Activated CD8-positive, alpha-beta T cell treated with anti-CD3 and anti-CD28 coated beads for 36 hours (primary cell): ENCODE measurements at regions of chr13 and their contacts with region 1.

Region 1: DNA sequence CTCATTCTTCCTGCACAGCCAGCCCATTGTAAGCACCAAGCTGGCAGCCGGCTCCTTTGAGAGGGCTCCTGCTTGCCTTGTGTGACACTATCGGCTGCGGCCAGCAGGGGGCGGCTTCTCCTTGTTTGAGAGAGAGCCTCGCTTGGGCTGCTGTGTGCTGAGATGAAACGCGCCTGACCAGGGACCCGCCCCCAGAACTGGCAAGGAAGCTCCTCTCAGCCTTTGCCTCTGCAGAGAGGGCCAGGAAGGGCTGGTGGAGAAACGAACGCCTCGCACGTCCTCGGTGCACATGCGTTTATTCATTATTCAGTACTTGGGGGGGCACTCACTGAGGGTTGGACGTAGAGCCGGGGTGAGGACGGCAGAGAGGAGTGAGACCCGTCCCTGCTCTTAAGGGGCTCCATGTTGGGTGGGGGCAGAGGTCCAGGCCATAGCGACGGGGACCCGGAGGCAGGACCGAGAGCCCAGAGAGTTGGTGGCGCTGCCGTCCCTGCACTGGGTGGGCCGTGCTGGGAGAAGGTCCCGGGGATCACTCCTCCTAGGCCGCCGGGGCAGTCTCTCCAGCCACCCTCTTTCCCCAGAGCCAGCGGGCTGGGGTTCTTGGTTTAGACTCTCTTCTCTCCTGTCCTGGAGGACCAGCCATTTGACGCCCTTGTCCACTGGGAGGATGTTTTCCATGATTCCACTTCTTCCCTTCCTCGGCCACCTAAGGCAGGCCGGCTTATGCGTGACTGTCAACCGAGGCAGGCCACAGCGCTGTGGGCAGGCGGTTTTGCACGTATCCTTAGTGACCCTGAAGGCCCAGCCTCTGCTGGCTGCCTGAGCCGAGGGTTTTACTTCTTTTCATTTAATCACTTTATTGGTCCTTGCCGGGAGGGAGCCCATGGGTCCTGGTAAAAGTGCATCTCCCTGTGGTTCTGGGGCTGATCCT is 174.5 kb downstream of the KATNAL1 start:
- DNase-seq: peak; percentile 99
- ATAC-seq: peak; percentile 100
- H3K4me3 Mint-ChIP-seq: no peak overlapping the region
- H3K27ac Mint-ChIP-seq: peak overlapping the region; percentile 16
- H3K4me1 Mint-ChIP-seq: peaks cover 12% of the 10 kb centered on the region
- H3K27me3 Mint-ChIP-seq: no peaks in the 10 kb centered on the region
- CTCF ChIP-seq: peak; percentile 80

Region 2: DNA sequence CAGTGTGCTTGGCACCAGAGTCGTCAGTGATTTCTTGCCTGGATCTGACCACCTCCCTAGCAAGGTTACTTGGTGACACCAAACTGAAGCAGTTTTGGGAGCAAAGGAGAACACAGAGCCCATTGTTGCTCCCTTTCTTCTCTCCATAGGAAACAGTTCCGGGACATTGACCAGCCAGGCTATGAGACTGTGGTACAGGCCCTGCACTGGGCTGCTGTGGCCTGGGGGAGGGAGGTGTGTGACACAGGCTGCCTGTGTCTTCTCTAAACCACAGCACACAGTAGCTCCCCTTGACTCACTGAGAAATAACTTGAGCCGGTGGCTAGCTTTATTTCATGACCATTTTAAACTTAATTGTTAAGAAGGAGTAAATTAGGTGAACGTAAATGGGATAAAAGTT is 67.7 kb before region 1 on chr13:
- CTCF ChIA-PET with region 1: no interaction called
- POLR2A ChIA-PET with region 1: no interaction called
- intact Hi-C with region 1: no loop called
- DNase-seq: no peak
- ATAC-seq: no peak
- H3K4me3 Mint-ChIP-seq: no peak overlapping the region
- H3K27ac Mint-ChIP-seq: no peak overlapping the region
- H3K4me1 Mint-ChIP-seq: no peaks in the 10 kb centered on the region
- H3K27me3 Mint-ChIP-seq: no peaks in the 10 kb centered on the region
- CTCF ChIP-seq: no peak

Region 3: GRCh38 chr13:30088312-30088855 is 44.5 kb before region 1 on chr13:
- CTCF ChIA-PET with region 1: no interaction called
- POLR2A ChIA-PET with region 1: no interaction called
- intact Hi-C with region 1: no loop called
- DNase-seq: no peak
- ATAC-seq: no peak
- H3K4me3 Mint-ChIP-seq: no peak overlapping the region
- H3K27ac Mint-ChIP-seq: no peak overlapping the region
- H3K4me1 Mint-ChIP-seq: peaks cover 2% of the 10 kb centered on the region
- H3K27me3 Mint-ChIP-seq: no peaks in the 10 kb centered on the region
- CTCF ChIP-seq: no peak

Region 4: DNA sequence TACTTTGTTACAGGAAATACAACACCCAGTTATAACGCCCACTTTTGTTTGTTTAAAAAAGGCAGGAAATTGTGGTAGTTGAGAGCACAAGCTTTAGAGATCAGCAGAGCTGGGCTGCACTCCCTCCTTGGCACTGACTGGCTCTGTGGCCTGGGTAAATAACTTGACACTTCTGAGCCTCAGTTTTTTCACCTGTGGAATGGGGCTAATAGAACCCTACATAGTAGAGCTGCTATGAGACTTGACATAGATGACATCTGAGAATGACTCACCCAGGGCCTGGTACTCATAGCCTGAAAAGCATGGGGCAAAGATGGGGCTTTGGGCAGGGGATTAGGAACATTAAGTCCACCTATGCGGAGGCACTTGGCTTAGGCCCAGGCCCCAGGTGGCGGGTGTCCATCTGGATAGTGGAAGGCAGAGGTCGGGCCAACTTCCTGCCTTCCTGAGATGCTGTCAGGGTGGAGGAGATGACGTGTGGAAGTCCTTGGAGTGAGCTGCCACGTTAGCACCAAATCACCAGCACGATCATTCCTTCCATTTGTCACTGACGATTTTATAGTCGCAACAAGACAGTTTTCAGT is 15.4 kb after region 1 on chr13:
- CTCF ChIA-PET with region 1: interaction called, 102 read pairs
- POLR2A ChIA-PET with region 1: interaction called, 6 read pairs
- intact Hi-C with region 1: no loop called
- DNase-seq: peak; percentile 45
- ATAC-seq: peak; percentile 45
- H3K4me3 Mint-ChIP-seq: no peak overlapping the region
- H3K27ac Mint-ChIP-seq: peak overlapping the region; percentile 90
- H3K4me1 Mint-ChIP-seq: peaks cover 77% of the 10 kb centered on the region
- H3K27me3 Mint-ChIP-seq: no peaks in the 10 kb centered on the region
- CTCF ChIP-seq: no peak

Region 5: DNA sequence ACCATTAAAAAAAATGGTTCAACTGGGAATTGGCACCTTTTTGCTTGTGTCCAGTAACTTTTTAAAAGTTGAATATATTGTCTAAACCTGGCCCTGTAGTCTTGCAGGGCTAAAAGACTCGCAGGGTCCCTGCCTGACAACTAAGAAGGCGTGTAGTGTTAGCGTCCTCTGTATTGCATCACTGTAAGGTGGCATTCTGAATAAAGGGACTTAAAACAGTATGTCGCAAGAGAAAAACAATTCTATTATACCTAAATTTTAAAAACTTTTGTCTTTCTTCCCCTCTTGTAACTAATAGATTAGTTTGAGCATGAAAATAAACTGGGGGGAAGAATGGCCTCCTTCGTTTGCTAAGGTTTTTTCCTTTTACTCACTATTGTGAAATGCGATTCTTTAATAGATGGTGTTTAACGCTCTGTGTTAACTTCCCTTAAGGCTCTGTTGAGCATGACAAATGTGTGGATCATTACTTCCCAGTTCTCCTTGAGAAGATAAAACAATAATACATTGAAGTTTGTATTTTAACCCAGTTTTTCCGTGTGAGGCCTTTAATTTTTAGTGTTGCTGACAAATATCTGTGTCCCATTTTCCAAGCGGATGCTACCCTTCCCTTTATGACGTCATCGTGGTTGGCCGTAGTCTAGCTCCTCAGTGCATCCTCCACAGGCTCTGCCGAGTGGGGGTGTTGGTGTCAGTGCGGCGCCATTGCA is 39.9 kb after region 1 on chr13:
- CTCF ChIA-PET with region 1: interaction called, 27 read pairs
- POLR2A ChIA-PET with region 1: interaction called, 4 read pairs
- intact Hi-C with region 1: no loop called
- DNase-seq: no peak
- ATAC-seq: no peak
- H3K4me3 Mint-ChIP-seq: no peak overlapping the region
- H3K27ac Mint-ChIP-seq: no peak overlapping the region
- H3K4me1 Mint-ChIP-seq: peaks cover 20% of the 10 kb centered on the region
- H3K27me3 Mint-ChIP-seq: no peaks in the 10 kb centered on the region
- CTCF ChIP-seq: no peak

Region 6: GRCh38 chr13:30235216-30235615 is 102.3 kb after region 1 on chr13:
- CTCF ChIA-PET with region 1: interaction called, 10 read pairs
- POLR2A ChIA-PET with region 1: no interaction called
- intact Hi-C with region 1: no loop called
- DNase-seq: no peak
- ATAC-seq: no peak
- H3K4me3 Mint-ChIP-seq: no peak overlapping the region
- H3K27ac Mint-ChIP-seq: no peak overlapping the region
- H3K4me1 Mint-ChIP-seq: no peaks in the 10 kb centered on the region
- H3K27me3 Mint-ChIP-seq: no peaks in the 10 kb centered on the region
- CTCF ChIP-seq: no peak

Region 7: GRCh38 chr13:30334663-30335386 is 201.9 kb after region 1 on chr13:
- CTCF ChIA-PET with region 1: interaction called, 19 read pairs
- POLR2A ChIA-PET with region 1: no interaction called
- intact Hi-C with region 1: no loop called
- DNase-seq: peak; percentile 24
- ATAC-seq: peak; percentile 56
- H3K4me3 Mint-ChIP-seq: no peak overlapping the region
- H3K27ac Mint-ChIP-seq: no peak overlapping the region
- H3K4me1 Mint-ChIP-seq: peaks cover 9% of the 10 kb centered on the region
- H3K27me3 Mint-ChIP-seq: no peaks in the 10 kb centered on the region
- CTCF ChIP-seq: peak; percentile 78

Region 8: DNA sequence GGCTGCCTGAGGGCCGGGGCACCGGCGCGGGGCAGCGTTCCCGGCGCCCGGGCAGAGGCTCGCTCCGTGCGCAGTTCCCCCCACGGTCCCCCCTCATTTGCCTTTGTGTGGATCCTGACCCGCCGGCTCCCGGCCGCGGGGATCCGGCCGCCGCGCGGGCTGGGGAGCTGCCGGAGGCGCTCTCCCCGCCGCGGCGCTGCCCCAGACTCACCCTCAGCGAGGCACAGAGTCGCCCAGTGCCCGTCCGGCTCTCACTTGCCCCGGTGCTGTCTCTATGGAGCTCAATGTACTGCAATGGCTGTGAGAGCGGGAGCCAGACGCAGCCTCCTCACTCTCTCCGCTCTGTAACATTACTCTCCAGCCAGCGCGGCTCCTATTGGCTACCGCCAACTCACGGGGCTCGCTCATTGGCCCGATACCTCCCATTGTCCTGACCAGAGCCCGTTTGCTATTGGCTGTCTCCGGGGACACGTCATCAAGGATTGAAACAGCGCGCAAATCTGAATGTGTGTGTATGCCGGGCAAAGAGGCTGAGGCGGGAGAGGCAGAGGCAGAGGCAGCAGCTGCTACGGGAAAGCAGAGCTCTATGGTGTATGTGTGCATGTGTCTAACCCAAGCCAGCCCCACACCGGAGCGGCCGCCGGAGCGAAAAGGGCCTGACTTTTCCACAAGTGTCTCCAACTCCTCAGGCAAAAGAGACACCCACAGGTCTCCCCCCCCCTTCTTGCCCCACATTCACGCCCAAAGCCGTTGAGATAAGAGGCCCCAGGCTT is 332.9 kb after region 1 on chr13 and contains the start of gene HMGB1:
- CTCF ChIA-PET with region 1: interaction called, 8 read pairs
- POLR2A ChIA-PET with region 1: interaction called, 4 read pairs
- intact Hi-C with region 1: loop called (anchors 10 kb)
- DNase-seq: peak; percentile 99
- ATAC-seq: peak; percentile 90
- H3K4me3 Mint-ChIP-seq: peak within 1 kb of the TSS; percentile 97
- H3K27ac Mint-ChIP-seq: peak within 1 kb of the TSS; percentile 97
- H3K4me1 Mint-ChIP-seq: peaks cover 25% of the 10 kb centered on the region
- H3K27me3 Mint-ChIP-seq: peaks cover 1% of the 10 kb centered on the region
- CTCF ChIP-seq: no peak
- total RNA-seq, gene HMGB1: 666 to 676 TPM